Upper lobe of right lung (tissue), 1 donor: ENCODE measurements at regions of chr1 and their contacts with region 1.

Region 1: GRCh38 chr1:22976461-22977243 is 4.0 kb upstream of the LACTBL1 start:
- DNase-seq: peak; percentile 69
- ATAC-seq: peak; percentile 96
- H3K4me3 ChIP-seq: no peak overlapping the region
- H3K27ac ChIP-seq: no peak overlapping the region
- H3K4me1 ChIP-seq: no peaks in the 10 kb centered on the region
- H3K27me3 ChIP-seq: peaks cover 16% of the 10 kb centered on the region
- CTCF ChIP-seq: peak; percentile 66

Region 2: GRCh38 chr1:22944346-22945055 is 32.2 kb before region 1 on chr1:
- intact Hi-C with region 1: no loop called
- DNase-seq: no peak
- ATAC-seq: no peak
- H3K4me3 ChIP-seq: no peak overlapping the region
- H3K27ac ChIP-seq: no peak overlapping the region
- H3K4me1 ChIP-seq: no peaks in the 10 kb centered on the region
- H3K27me3 ChIP-seq: peaks cover under 1% of the 10 kb centered on the region
- CTCF ChIP-seq: no peak

Region 3: DNA sequence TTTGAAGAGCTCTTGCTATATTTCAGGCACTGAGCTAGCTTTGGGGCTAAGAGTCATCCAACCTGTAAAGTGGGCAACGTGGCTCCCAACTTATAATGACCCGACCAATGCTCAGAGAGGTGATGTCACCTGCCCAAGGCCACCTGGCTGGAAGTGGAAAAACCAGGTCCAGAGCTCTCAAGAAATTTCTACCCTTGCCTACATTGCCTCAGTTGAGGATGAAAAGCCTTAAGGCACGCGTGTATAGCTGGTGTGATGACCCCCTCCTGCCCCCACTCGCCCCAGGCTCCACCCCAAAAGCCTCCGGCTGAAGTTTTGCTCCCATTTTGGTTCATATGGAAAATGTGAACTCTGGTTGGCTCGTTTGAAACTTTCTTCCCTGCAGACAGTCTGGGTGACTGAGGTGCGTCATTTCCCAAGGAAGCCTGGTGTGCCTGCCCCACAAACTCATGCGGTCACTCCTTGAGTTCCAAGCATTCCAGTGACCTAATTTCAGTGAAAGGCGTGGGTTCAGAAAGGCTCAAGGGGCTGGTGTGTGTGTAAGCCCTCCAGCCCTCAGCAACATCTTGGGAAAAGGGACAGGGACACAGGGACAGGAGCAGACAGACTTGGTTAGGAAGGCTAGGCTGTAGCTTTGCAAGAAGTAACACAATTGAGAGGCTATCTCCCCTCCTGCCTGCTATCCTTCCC is 220.1 kb after region 1 on chr1:
- intact Hi-C with region 1: loop called (anchors 10 kb)
- DNase-seq: no peak
- ATAC-seq: peak; percentile 89
- H3K4me3 ChIP-seq: no peak overlapping the region
- H3K27ac ChIP-seq: no peak overlapping the region
- H3K4me1 ChIP-seq: no peaks in the 10 kb centered on the region
- H3K27me3 ChIP-seq: no peaks in the 10 kb centered on the region
- CTCF ChIP-seq: no peak